Activated naive CD4-positive, alpha-beta T cell treated with anti-CD3 and anti-CD28 coated beads for 36 hours (primary cell): ENCODE measurements at regions of chr5 and their contacts with region 1.

Region 1: DNA sequence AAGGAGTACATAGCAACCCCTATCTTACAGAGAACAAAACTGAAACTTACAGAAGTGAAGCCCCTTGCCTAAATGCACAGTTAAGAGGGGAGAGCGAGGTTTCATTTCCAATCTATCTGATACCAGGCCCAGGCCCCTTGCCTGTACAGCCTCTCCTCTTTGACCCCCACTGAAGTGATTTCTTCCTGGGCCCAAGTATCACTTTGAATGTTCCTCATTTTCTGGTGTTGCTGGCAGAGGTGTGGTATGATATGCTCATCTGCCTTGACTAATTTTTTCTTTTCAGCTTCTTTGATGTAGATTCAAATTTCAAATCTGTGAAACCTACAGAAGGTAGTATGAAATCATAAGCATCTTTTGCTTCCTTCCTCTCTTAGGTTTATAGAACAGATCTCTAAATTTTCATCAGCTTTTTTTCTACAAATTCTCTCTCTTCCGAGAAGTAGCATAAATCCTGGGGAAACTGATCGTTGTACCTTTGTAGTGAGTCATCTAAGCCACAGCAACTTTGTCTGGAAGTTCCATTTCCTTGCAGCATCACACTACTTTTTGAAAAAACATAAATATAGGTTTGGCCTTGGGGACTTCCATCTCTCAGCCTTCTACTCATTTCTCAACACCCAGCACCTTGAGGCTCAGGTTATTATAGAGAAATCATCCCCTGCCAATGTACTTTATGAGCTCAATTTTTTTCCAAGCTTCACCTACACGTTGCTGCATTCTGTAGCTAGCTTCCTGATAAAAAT is 402.4 kb upstream of the PTGER4 start:
- DNase-seq: peak; percentile 67
- H3K4me3 Mint-ChIP-seq: no peak overlapping the region
- H3K27ac Mint-ChIP-seq: peak overlapping the region; percentile 95
- H3K4me1 Mint-ChIP-seq: peaks cover 73% of the 10 kb centered on the region
- H3K27me3 Mint-ChIP-seq: no peaks in the 10 kb centered on the region

Region 2: GRCh38 chr5:39657943-39658342 is 619.4 kb before region 1 on chr5:
- CTCF ChIA-PET with region 1: no interaction called
- intact Hi-C with region 1: loop called (anchors 1 kb)
- DNase-seq: peak; percentile 11
- H3K4me3 Mint-ChIP-seq: no peak overlapping the region
- H3K27ac Mint-ChIP-seq: no peak overlapping the region
- H3K4me1 Mint-ChIP-seq: peaks cover 25% of the 10 kb centered on the region
- H3K27me3 Mint-ChIP-seq: peaks cover 14% of the 10 kb centered on the region

Region 3: GRCh38 chr5:40223884-40224402 is 53.4 kb before region 1 on chr5:
- CTCF ChIA-PET with region 1: interaction called, 4 read pairs
- intact Hi-C with region 1: loop called (anchors 1 kb)
- DNase-seq: peak; percentile 66
- H3K4me3 Mint-ChIP-seq: peak overlapping the region; percentile 31
- H3K27ac Mint-ChIP-seq: peak overlapping the region; percentile 92
- H3K4me1 Mint-ChIP-seq: peaks cover 50% of the 10 kb centered on the region
- H3K27me3 Mint-ChIP-seq: no peaks in the 10 kb centered on the region

Region 4: DNA sequence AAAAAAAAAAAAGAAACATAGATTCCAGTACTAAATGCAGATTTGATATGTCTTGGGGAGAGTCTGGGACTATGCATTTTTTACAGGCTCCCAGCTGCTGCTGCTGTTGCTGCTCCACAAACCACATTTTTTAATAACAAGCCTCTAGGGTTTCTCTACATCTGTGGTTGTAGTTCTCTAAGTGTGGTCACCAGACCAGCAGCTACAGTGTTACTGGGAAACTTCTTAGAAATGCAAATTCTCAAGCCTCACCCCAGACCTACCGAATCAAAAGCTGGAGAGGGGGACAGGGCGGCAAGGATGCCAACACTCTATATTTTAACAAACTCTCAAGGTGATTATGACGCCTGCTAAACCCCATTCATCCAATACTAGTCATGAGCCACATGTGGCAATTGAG is 109.0 kb after region 1 on chr5:
- CTCF ChIA-PET with region 1: interaction called, 3 read pairs
- intact Hi-C with region 1: loop called (anchors 1 kb)
- DNase-seq: peak; percentile 34
- H3K4me3 Mint-ChIP-seq: no peak overlapping the region
- H3K27ac Mint-ChIP-seq: peak overlapping the region; percentile 85
- H3K4me1 Mint-ChIP-seq: peaks cover 81% of the 10 kb centered on the region
- H3K27me3 Mint-ChIP-seq: no peaks in the 10 kb centered on the region

Region 5: DNA sequence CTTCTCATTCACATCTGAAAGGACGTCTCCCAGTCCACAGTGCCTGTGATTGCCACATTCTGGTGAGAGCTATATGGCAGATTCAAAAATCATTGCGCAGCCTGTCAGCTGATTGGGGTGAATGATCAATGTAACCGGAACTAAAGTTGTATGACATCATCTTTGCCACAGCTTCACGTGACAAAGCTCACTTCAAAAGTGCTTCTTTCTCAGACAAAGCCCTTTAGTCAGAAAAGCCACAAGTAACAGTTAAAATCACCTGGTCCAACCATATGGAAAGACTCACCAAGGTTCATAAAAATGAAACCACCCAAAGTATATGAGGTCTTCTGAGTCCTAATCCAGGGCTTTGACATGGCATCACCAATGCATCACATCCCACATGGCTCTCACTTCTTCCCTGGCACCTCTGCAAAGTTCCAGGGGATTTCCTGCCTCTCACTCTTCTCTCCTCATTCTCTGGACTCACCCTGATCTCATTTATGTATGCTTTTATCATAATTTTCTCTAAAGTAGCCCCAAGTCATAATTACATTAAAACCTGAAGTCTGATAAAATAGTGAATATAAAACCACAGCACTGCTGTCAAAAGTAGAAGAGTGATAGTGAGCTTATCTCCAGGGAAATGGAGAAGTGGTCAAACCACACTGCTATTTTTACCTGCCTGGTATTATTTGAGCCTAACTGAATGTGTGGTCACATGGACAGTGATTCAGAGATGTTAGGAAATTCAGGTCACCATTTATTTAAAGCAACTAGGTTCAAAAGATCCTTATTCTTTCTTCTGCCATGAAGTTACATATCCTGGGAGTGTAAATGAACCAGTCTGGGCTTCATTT is 209.3 kb after region 1 on chr5:
- CTCF ChIA-PET with region 1: no interaction called
- intact Hi-C with region 1: loop called (anchors 1 kb)
- DNase-seq: peak; percentile 85
- H3K4me3 Mint-ChIP-seq: peak overlapping the region; percentile 1
- H3K27ac Mint-ChIP-seq: peak overlapping the region; percentile 92
- H3K4me1 Mint-ChIP-seq: peaks cover 83% of the 10 kb centered on the region
- H3K27me3 Mint-ChIP-seq: no peaks in the 10 kb centered on the region

Region 6: DNA sequence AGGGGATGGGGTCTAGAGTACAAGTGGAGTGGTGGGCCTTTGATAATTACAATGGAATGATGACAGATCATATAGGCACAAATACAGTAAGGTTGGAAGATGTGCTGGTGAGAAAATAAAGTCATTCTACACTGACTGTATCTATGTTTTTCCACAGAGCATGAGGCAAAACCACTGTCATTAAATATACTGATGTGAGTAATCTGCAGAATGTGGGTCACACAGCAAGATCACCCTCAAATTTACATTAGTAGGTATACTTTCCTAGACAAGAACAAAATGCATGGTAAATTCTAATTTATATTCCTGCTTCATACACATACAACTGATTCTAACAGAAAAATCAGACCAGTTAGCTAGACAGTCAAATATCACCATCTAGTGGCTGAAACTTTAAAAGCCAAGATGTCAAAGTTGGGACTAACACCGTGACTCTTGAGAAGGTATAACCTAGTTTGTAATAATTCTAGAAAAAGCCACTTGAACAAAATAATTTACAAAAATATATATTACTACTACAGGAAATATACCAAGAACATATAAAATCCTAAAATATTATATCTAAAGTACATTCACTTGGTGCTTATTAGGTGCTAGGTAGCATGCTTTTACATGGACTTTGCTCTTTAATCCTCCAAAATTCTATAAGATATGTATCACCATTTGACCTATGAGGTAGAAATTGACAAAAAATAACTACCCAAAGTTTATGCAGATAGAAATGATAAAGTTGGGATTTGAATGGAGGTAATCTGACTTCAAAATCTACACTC is 459.0 kb after region 1 on chr5:
- CTCF ChIA-PET with region 1: no interaction called
- intact Hi-C with region 1: loop called (anchors 2 kb)
- DNase-seq: no peak
- H3K4me3 Mint-ChIP-seq: no peak overlapping the region
- H3K27ac Mint-ChIP-seq: no peak overlapping the region
- H3K4me1 Mint-ChIP-seq: peaks cover 26% of the 10 kb centered on the region
- H3K27me3 Mint-ChIP-seq: no peaks in the 10 kb centered on the region